PC-9 (cell line): ENCODE measurements at regions of chr4 and their contacts with region 1.

Region 1: DNA sequence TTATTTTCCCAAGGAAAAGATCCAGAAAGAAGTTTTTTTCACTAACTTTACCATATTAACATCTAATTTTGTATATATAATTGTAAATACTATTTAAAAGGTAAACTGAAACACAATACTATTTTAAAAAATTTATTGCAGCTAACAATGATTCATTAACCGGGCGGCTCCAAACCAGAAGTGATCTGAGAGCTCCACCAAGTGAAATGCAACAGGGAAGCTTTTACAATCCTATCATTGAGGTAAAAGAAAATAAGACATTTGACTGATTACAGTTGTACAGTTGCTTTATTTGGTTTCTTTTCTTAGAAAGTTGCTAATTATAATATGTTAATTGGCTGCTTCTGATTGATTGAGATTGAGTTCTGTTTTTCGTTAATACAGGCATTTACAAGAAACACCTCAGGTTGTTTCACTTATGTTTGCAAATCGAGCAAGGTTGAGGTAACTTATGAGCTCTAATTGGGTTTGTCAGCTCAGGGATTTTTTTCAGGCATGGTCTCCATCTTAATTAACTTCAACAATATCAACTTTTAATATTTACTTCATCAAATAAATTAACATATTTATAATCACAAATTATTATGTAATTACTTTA is 220.2 kb upstream of the UGT8 start:
- DNase-seq: peak in 1 of 2 experiments; percentile 5
- H3K4me3 ChIP-seq: no peak overlapping the region
- H3K27ac ChIP-seq: no peak overlapping the region
- H3K4me1 ChIP-seq: no peaks in the 10 kb centered on the region
- H3K27me3 ChIP-seq: no peaks in the 10 kb centered on the region
- CTCF ChIP-seq: no peak

Region 2: DNA sequence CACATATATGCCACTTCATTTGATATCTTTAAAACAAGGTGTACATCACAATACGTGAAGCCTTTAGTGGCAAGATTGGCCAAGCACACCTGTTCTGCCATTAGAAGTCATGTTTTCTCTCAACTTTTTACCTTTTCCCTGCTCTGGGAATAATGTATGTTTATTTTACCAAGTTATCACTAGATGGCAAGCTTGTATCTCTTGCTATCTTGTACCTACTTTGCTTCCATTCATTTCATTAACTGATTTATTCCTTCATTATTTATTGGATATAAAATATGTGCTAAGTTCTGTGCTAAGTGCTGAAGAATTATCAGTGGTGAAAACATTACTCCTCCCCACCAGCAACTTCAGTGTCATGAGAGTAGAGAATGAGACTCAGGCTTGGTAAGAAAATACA is 1083.5 kb before region 1 on chr4:
- CTCF ChIA-PET with region 1: no interaction called
- POLR2A ChIA-PET with region 1: no interaction called
- intact Hi-C with region 1: loop called (anchors 1 kb)
- DNase-seq: no peak
- H3K4me3 ChIP-seq: no peak overlapping the region
- H3K27ac ChIP-seq: no peak overlapping the region
- H3K4me1 ChIP-seq: no peaks in the 10 kb centered on the region
- H3K27me3 ChIP-seq: no peaks in the 10 kb centered on the region
- CTCF ChIP-seq: no peak